ENCODE measurements at regions of chr1 and their contacts with region 1.

Region 1: GRCh38 chr1:115609021-115609420 is 32.7 kb upstream of the VANGL1 start:
- DNase-seq: no peak
- ATAC-seq: no peak
- H3K4me3 ChIP-seq: no peak overlapping the region
- H3K27ac ChIP-seq: no peak overlapping the region
- H3K4me1 ChIP-seq: no peaks in the 10 kb centered on the region
- H3K27me3 ChIP-seq: no peaks in the 10 kb centered on the region
- CTCF ChIP-seq: no peak

Region 2: DNA sequence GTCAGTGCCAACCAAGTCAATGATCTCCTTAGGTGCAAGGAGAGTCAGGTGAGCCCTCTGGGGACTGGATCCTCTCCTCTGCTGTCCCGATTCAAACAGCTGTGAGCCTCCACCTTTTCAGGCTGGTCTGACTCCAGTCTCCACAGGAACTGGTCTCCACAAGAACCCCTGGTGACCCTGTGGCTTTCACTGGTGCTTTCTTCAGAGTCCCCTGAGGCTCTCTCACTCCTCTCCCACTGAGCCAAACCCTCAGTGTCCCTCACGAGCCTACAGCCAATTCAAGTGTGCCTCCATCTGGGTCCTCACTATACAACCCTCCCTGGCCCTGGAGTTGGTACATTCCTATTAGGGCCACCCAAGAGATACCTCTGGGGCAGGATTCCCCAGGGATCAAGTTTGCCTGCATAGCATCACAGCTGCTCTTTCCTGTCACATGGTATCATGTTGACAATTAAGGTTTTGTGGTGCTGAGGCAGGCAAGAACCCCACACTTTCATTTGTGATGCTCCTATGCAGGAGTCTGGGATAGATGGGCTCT is 265.8 kb before region 1 on chr1:
- intact Hi-C with region 1: no loop called
- DNase-seq: no peak
- ATAC-seq: no peak
- H3K4me3 ChIP-seq: no peak overlapping the region
- H3K27ac ChIP-seq: no peak overlapping the region
- H3K4me1 ChIP-seq: peaks cover 0 to 2% of the 10 kb centered on the region in 2 donors
- H3K27me3 ChIP-seq: peaks cover 5 to 15% of the 10 kb centered on the region in 2 donors
- CTCF ChIP-seq: no peak

Region 3: GRCh38 chr1:115706587-115707425 is 97.8 kb after region 1 on chr1:
- intact Hi-C with region 1: loop called in 1 of 2 experiments (anchors 5 kb)
- DNase-seq: peak in 1 of 4 donors; percentile 57
- ATAC-seq: peak; percentile 75
- H3K4me3 ChIP-seq: no peak overlapping the region
- H3K27ac ChIP-seq: no peak overlapping the region
- H3K4me1 ChIP-seq: no peaks in the 10 kb centered on the region
- H3K27me3 ChIP-seq: peaks cover 0 to 3% of the 10 kb centered on the region in 2 donors
- CTCF ChIP-seq: peak; percentile 38 to 65

Region 4: DNA sequence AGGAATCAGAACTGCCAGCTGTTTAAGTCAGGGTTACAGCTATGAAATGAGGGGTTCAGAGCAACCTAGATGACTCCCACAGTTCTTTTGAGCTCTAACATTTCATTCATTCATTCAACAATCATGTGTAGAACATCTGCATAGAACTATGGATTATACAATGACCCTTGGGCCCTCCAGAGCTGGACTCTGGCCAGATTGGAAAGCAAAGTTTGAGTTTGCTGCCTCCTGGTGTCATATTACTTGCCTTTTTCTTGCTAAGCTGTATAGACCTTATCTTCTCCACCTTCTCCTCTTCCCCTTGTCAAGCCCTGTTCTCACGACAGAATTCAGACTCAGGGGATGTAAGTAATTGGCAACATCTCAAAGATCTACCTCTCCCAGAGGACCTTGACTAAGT is 155.5 kb after region 1 on chr1:
- intact Hi-C with region 1: loop called in 1 of 2 experiments (anchors 10 kb)
- DNase-seq: peak in 2 of 4 donors; percentile 23 to 35
- ATAC-seq: peak; percentile 59
- H3K4me3 ChIP-seq: no peak overlapping the region
- H3K27ac ChIP-seq: no peak overlapping the region
- H3K4me1 ChIP-seq: no peaks in the 10 kb centered on the region
- H3K27me3 ChIP-seq: no peaks in the 10 kb centered on the region
- CTCF ChIP-seq: peak; percentile 11 to 22

Region 5: DNA sequence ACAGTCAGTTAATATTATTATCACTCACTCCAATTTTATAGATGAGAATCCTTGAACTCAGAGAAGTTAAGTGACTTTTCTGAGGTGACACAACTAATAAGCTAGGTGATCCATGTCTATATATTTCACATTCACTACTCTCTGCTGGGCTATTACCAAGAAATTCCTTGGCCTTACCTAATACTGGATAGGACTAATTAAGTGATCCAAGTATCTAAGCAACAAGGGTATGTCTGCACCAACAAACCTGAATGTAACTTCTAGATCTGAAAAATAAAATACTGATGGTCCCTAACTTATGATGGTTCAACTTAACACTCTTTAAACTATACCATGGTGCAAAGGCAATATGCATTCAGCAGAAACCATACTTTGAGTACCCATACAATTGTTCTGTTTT is 174.3 kb after region 1 on chr1:
- intact Hi-C with region 1: no loop called
- DNase-seq: no peak
- ATAC-seq: no peak
- H3K4me3 ChIP-seq: no peak overlapping the region
- H3K27ac ChIP-seq: no peak overlapping the region
- H3K4me1 ChIP-seq: no peaks in the 10 kb centered on the region
- H3K27me3 ChIP-seq: no peaks in the 10 kb centered on the region
- CTCF ChIP-seq: no peak

Measured in left lung (tissue), 14 donors.